ENCODE measurements at regions of chr17 and their contacts with region 1.

Region 1: DNA sequence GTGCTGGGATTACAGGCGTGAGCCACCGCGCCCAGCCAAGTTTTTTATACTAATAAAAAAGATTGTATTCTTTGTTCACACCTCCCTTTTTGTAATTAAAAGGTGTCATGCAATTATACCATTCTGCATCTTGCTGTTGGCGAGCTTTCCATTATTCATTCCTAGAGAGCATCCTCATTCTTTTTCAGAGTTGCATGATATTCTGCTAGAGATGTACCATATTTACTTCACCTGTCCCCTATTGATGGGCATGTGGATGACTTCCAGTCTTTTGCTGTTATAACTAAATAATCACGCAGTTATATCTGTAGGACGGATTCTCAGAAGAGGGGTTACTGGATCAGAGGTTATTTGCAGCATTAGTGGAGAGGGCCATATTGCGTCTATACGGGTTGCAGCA is 17.0 kb downstream of the SGSM2 start:
- DNase-seq: no peak
- ATAC-seq: no peak
- H3K4me3 Mint-ChIP-seq: no peak overlapping the region
- H3K27ac Mint-ChIP-seq: peak overlapping the region; percentile 96
- H3K4me1 Mint-ChIP-seq: peaks cover 19% of the 10 kb centered on the region
- H3K27me3 Mint-ChIP-seq: no peaks in the 10 kb centered on the region

Region 2: GRCh38 chr17:2303204-2304188 is 50.8 kb before region 1 on chr17 and contains the starts of genes SMG6 and SRR:
- CTCF ChIA-PET with region 1: interaction called, 12 read pairs
- POLR2A ChIA-PET with region 1: no interaction called
- DNase-seq: peak; percentile 96
- ATAC-seq: peak; percentile 90
- H3K4me3 Mint-ChIP-seq: peak within 1 kb of the TSS; percentile 95
- H3K27ac Mint-ChIP-seq: peak within 1 kb of the TSS; percentile 83
- H3K4me1 Mint-ChIP-seq: peaks cover 56% of the 10 kb centered on the region
- H3K27me3 Mint-ChIP-seq: no peaks in the 10 kb centered on the region
- total RNA-seq, gene SMG6: 49.8 to 55.9 TPM
- total RNA-seq, gene SRR: 18.7 to 23.1 TPM

Region 3: DNA sequence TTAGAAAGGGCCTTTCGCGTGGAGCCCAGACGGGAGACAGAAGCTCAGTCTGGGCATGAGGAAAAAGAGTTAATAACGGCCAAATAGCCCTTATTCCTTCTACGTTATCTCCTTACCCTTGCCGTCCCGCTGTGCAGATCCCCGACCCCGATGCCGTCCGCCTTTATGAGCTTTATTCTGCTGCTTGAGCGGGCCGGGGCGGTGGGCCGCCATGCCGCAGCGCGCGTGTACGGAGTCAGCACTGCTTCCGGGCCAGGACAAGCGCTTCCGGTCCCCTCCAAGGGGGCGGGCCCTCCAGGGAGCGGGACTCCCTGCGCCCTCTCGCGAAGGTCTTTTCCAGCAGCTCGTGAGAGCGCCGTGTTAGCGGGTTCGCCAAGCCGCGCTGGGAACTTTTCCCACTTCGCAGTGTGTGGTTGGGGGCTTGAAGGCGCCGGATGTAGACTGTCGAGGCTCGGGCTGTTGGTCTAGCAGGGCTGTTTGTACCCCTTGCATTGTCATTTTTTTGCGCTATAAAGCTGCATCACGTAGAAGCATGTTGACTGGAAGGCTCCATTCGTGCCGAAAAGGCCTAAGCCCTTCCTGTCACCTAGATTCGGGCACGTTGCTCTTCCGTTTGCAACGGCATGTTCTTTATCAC is 18.0 kb before region 1 on chr17 and contains the start of gene TSR1:
- CTCF ChIA-PET with region 1: interaction called, 36 read pairs
- POLR2A ChIA-PET with region 1: interaction called, 10 read pairs
- DNase-seq: peak; percentile 93
- ATAC-seq: peak; percentile 90
- H3K4me3 Mint-ChIP-seq: peak within 1 kb of the TSS; percentile 99
- H3K27ac Mint-ChIP-seq: peak within 1 kb of the TSS; percentile 96
- H3K4me1 Mint-ChIP-seq: peaks cover 11% of the 10 kb centered on the region
- H3K27me3 Mint-ChIP-seq: no peaks in the 10 kb centered on the region
- total RNA-seq, gene TSR1: 36.0 to 36.6 TPM

Measured in activated CD8-positive, alpha-beta T cell treated with anti-CD3 and anti-CD28 coated beads, Interleukin-2, amount 10 ng/mL, durations not matched to agents 7 days and 5 days (primary cell).